Tibial artery (tissue), 4 donors: ENCODE measurements at regions of chr13 and their contacts with region 1.

Region 1: GRCh38 chr13:30132623-30133553 is 174.5 kb downstream of the KATNAL1 start:
- DNase-seq: peak; percentile 97 to 99
- H3K4me3 ChIP-seq: no peak overlapping the region
- H3K27ac ChIP-seq: no peak overlapping the region
- H3K4me1 ChIP-seq: peaks cover 0 to 21% (median 11%) of the 10 kb centered on the region in 4 donors
- H3K27me3 ChIP-seq: no peaks in the 10 kb centered on the region
- CTCF ChIP-seq: peak; percentile 90 to 95

Region 2: GRCh38 chr13:31044377-31045285 is 911.7 kb after region 1 on chr13:
- intact Hi-C with region 1: loop called (anchors 10 kb)
- DNase-seq: peak; percentile 71 to 86
- H3K4me3 ChIP-seq: no peak overlapping the region
- H3K27ac ChIP-seq: peak overlapping the region in 1 of 2 donors; percentile 47
- H3K4me1 ChIP-seq: peaks cover 0 to 21% (median 14%) of the 10 kb centered on the region in 4 donors
- H3K27me3 ChIP-seq: peaks cover 0 to 2% of the 10 kb centered on the region in 2 donors
- CTCF ChIP-seq: peak; percentile 93 to 97